ENCODE measurements at regions of chr17 and their contacts with region 1.

Region 1: DNA sequence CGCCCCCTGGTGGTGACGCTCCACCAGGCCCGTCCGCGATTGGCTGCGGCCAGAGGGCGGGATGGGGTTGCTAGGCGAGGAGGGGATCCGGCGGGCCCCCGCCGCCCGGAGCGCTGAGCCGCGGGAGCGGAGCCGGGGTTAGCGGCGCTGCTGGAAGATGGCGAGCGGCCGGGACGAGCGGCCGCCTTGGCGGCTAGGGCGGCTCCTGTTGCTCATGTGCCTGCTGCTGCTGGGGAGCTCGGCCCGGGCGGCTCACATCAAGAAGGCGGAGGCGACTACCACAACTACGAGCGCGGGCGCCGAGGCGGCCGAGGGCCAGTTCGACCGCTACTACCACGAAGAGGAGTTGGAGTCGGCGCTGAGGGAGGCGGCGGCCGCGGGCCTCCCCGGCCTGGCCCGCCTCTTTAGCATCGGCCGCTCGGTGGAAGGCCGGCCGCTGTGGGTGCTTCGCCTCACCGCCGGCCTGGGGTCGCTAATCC is at the start of gene CPD:
- DNase-seq: peak; percentile 92
- ATAC-seq: peak; percentile 95
- H3K4me3 ChIP-seq: peak within 1 kb of the TSS; percentile 66
- H3K27ac ChIP-seq: peak within 1 kb of the TSS; percentile 70
- H3K4me1 ChIP-seq: peaks cover 15% of the 10 kb centered on the region
- H3K27me3 ChIP-seq: no peaks in the 10 kb centered on the region
- CTCF ChIP-seq: no peak
- POLR2A ChIP-seq: peak; percentile 87
- RAD21 ChIP-seq: no peak
- total RNA-seq, gene CPD: 78.0 and 94.5 TPM in 2 replicates

Region 2: GRCh38 chr17:29664743-29665480 is 714.0 kb before region 1 on chr17:
- CTCF ChIA-PET with region 1: no interaction called
- POLR2A ChIA-PET with region 1: no interaction called
- dilution Hi-C with region 1: no loop called
- in situ Hi-C with region 1: no loop called
- intact Hi-C with region 1: no loop called
- DNase-seq: peak; percentile 73
- ATAC-seq: peak; percentile 75
- H3K4me3 ChIP-seq: no peak overlapping the region
- H3K27ac ChIP-seq: no peak overlapping the region
- H3K4me1 ChIP-seq: peaks cover 3% of the 10 kb centered on the region; the same call in 1 of the 2 replicates
- H3K27me3 ChIP-seq: no peaks in the 10 kb centered on the region
- CTCF ChIP-seq: no peak
- POLR2A ChIP-seq: no peak
- RAD21 ChIP-seq: no peak

Region 3: DNA sequence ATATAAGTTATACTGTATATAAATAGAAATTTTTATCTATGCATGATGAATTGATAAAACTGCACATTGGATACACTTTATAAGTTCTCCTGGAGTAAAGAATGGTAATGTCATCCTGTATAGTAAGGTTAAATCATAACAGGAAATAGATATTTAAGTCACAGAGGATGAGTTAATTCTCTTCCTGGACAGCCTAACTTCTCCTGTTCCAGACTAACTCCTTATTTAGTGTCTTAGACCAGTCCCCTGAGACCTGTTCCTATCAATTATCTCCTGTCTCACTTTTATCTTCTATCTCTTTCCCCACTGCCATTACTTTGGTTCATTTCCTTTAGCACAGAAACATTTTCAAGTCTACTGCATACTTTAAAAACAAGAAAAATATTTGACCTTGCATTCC is 495.4 kb before region 1 on chr17:
- CTCF ChIA-PET with region 1: no interaction called
- POLR2A ChIA-PET with region 1: no interaction called
- dilution Hi-C with region 1: no loop called
- in situ Hi-C with region 1: no loop called
- intact Hi-C with region 1: no loop called
- DNase-seq: peak; percentile 43
- ATAC-seq: peak; percentile 51
- H3K4me3 ChIP-seq: no peak overlapping the region
- H3K27ac ChIP-seq: no peak overlapping the region
- H3K4me1 ChIP-seq: no peaks in the 10 kb centered on the region; the same call in 1 of the 2 replicates
- H3K27me3 ChIP-seq: no peaks in the 10 kb centered on the region
- CTCF ChIP-seq: no peak
- POLR2A ChIP-seq: no peak
- RAD21 ChIP-seq: no peak

Region 4: GRCh38 chr17:30187573-30187972 is 191.3 kb before region 1 on chr17:
- CTCF ChIA-PET with region 1: no interaction called
- POLR2A ChIA-PET with region 1: no interaction called
- dilution Hi-C with region 1: no loop called
- in situ Hi-C with region 1: no loop called
- intact Hi-C with region 1: no loop called
- DNase-seq: no peak
- ATAC-seq: no peak
- H3K4me3 ChIP-seq: no peak overlapping the region
- H3K27ac ChIP-seq: no peak overlapping the region
- H3K4me1 ChIP-seq: no peaks in the 10 kb centered on the region
- H3K27me3 ChIP-seq: no peaks in the 10 kb centered on the region
- CTCF ChIP-seq: no peak
- POLR2A ChIP-seq: no peak
- RAD21 ChIP-seq: no peak

Region 5: GRCh38 chr17:30291543-30292285 is 87.1 kb before region 1 on chr17 and contains the start of gene BLMH:
- CTCF ChIA-PET with region 1: no interaction called
- POLR2A ChIA-PET with region 1: no interaction called
- dilution Hi-C with region 1: no loop called
- in situ Hi-C with region 1: no loop called
- intact Hi-C with region 1: loop called (anchors 5 kb)
- DNase-seq: peak; percentile 77
- ATAC-seq: peak; percentile 97
- H3K4me3 ChIP-seq: peak within 1 kb of the TSS; percentile 76
- H3K27ac ChIP-seq: peak within 1 kb of the TSS; percentile 64
- H3K4me1 ChIP-seq: no peaks in the 10 kb centered on the region
- H3K27me3 ChIP-seq: peaks cover 2% of the 10 kb centered on the region; the same call in 1 of the 2 replicates
- CTCF ChIP-seq: no peak
- POLR2A ChIP-seq: peak; percentile 67
- RAD21 ChIP-seq: no peak
- total RNA-seq, gene BLMH: 20.8 and 27.2 TPM in 2 replicates

Region 6: GRCh38 chr17:30344283-30345088 is 34.4 kb before region 1 on chr17:
- CTCF ChIA-PET with region 1: no interaction called
- POLR2A ChIA-PET with region 1: no interaction called
- dilution Hi-C with region 1: no loop called
- in situ Hi-C with region 1: no loop called
- intact Hi-C with region 1: loop called (anchors 2 kb)
- DNase-seq: peak; percentile 59
- ATAC-seq: no peak; the same call in 1 of the 2 replicates
- H3K4me3 ChIP-seq: no peak overlapping the region
- H3K27ac ChIP-seq: no peak overlapping the region
- H3K4me1 ChIP-seq: peaks cover 19% of the 10 kb centered on the region
- H3K27me3 ChIP-seq: no peaks in the 10 kb centered on the region
- CTCF ChIP-seq: no peak
- POLR2A ChIP-seq: no peak
- RAD21 ChIP-seq: no peak